ENCODE measurements at regions of chr10 and their contacts with region 1.

Region 1: GRCh38 chr10:70404036-70404786 is at the start of gene EIF4EBP2:
- DNase-seq: peak; percentile 99
- ATAC-seq: peak; percentile 91
- H3K4me3 Mint-ChIP-seq: peak within 1 kb of the TSS; percentile 94
- H3K27ac Mint-ChIP-seq: peak within 1 kb of the TSS; percentile 91
- H3K4me1 Mint-ChIP-seq: peaks cover 37% of the 10 kb centered on the region
- H3K27me3 Mint-ChIP-seq: no peaks in the 10 kb centered on the region
- total RNA-seq, gene EIF4EBP2: 24.4 to 27.7 TPM

Region 2: GRCh38 chr10:70169649-70170364 is 234.4 kb before region 1 on chr10:
- CTCF ChIA-PET with region 1: interaction called, 3 read pairs
- POLR2A ChIA-PET with region 1: no interaction called
- intact Hi-C with region 1: loop called (anchors 1 kb)
- DNase-seq: no peak
- ATAC-seq: peak; percentile 5
- H3K4me3 Mint-ChIP-seq: peak overlapping the region; percentile 94
- H3K27ac Mint-ChIP-seq: peak overlapping the region; percentile 84
- H3K4me1 Mint-ChIP-seq: peaks cover 64% of the 10 kb centered on the region
- H3K27me3 Mint-ChIP-seq: no peaks in the 10 kb centered on the region

Region 3: GRCh38 chr10:70418229-70418628 is 14.0 kb after region 1 on chr10:
- CTCF ChIA-PET with region 1: interaction called, 10 read pairs
- POLR2A ChIA-PET with region 1: interaction called, 8 read pairs
- intact Hi-C with region 1: no loop called
- DNase-seq: peak; percentile 32
- ATAC-seq: peak; percentile 60
- H3K4me3 Mint-ChIP-seq: no peak overlapping the region
- H3K27ac Mint-ChIP-seq: peak overlapping the region; percentile 40
- H3K4me1 Mint-ChIP-seq: peaks cover 30% of the 10 kb centered on the region
- H3K27me3 Mint-ChIP-seq: no peaks in the 10 kb centered on the region

Region 4: DNA sequence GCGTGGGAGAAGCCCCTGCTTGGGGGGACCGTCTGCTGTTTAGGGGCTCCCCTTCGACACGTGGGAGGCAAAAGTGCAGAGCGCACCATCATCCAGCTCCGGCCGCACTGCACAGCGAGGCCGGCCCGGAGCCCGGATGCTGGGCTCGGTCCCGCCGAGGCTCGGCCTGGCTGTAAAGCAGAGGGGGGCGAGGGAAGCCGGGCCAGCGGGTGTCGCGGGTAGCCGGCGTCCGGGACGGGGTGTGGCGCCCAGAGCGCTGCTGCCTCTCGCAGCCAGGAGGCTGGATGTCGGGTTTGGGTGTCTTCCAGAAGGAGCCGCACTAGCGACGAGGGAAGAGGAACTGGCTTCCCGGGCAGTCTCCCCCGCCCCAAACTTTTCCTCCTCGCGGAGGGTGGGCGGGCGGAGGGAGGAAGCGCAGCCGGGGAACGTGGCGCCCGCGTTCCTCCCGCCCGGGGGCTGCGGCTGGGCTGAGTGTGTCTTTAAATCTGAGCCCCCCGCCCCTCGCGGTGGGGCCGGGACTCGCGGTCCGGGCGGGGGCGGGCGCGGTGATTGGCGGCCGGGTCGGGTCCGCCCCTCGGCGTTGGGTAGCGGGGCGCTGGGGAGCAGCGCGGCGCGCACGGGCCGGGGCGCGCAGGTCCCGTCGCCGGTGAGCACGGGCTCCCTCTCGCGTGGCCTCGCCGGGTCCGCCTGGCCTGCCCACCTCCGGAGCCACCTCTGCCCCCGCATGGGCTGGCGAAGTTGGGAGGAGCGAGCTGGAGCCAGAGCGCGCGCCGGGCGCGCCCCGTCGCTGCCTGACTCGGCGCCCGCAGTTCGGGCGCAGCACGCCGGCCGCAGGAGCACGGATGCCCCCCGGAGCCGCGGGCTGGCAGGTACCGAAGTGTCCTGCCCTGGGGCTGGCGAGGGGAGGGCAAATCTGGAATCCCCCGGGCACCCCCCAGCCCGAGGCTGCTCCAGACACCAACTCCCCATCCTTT is 74.3 kb after region 1 on chr10 and contains the start of gene PALD1:
- CTCF ChIA-PET with region 1: no interaction called
- POLR2A ChIA-PET with region 1: no interaction called
- intact Hi-C with region 1: loop called (anchors 1 to 5 kb)
- DNase-seq: peak; percentile 76
- ATAC-seq: peak; percentile 45
- H3K4me3 Mint-ChIP-seq: peak within 1 kb of the TSS; percentile 70
- H3K27ac Mint-ChIP-seq: peak within 1 kb of the TSS; percentile 67
- H3K4me1 Mint-ChIP-seq: peaks cover 41% of the 10 kb centered on the region
- H3K27me3 Mint-ChIP-seq: peaks cover 19% of the 10 kb centered on the region
- total RNA-seq, gene PALD1: 5.4 to 6.7 TPM